ENCODE measurements at regions of chr15 and their contacts with region 1.

Region 1: DNA sequence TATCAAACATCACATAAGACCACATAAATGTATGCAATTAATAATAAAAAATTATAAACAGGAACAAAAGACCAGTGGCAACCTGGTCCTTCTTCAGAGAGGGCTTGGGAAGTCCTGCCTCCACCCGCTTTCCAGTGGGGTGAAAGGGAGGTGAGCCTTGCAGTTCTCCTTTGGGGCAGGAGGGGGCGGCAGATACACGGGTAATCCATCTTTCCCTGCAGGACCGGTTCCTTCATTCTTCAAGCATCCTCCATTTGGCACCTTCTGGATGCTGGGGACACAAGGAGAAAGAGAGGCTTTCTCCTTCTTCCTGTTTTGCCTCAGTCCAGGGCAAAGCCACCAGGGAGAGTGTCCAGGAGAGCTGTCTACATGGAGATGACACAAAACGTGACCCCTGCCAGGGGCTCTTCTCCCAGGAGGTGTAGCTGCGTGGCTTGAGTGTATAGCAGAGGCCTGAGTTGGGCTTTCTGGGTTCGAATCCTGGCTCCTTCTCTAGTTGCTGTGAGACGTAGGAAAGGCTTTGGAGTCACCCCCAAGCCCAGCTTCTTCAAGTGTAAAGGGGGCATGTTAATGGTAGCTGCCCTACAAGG is 23.2 kb downstream of the RPLP1 start:
- DNase-seq: peak; percentile 76 to 85 (median 83)
- H3K4me3 ChIP-seq: no peak overlapping the region
- H3K27ac ChIP-seq: no peak overlapping the region
- H3K4me1 ChIP-seq: peaks cover 0 to 3% (median 2%) of the 10 kb centered on the region in 3 donors
- H3K27me3 ChIP-seq: no peaks in the 10 kb centered on the region
- CTCF ChIP-seq: peak; percentile 93

Region 2: DNA sequence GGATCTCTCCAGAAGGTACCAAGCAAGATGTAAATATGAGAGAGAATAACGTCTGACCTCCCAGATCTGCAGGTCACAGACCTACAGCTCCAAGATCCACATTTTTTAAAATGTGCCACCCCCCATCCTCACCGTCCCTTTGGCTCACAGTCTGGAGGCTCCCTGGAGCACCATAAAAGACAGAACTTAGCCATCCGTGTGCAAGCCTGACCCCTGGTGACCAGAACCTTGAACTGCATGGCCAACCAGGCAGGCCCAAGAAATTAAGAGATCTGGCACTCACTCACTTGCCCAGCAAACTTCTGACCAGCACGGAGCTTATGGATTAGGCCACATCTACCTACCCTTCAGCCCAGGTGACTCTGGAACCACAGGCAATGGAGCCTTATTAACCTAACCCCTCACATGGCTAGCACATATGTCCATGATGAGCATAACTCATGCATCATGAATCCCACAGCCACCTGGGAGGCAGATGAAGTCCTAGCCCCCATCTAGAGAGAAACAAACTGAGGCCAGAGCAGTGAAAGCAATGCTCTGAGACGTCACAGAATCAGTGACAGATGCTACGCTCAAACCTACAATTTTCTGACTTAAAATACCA is 1012.2 kb after region 1 on chr15:
- intact Hi-C with region 1: loop called (anchors 10 kb)
- DNase-seq: peak; percentile 74 to 87 (median 80)
- H3K4me3 ChIP-seq: no peak overlapping the region
- H3K27ac ChIP-seq: no peak overlapping the region
- H3K4me1 ChIP-seq: no peaks in the 10 kb centered on the region
- H3K27me3 ChIP-seq: no peaks in the 10 kb centered on the region
- CTCF ChIP-seq: peak; percentile 98